ENCODE measurements at regions of chr1 and their contacts with region 1.

Region 1: DNA sequence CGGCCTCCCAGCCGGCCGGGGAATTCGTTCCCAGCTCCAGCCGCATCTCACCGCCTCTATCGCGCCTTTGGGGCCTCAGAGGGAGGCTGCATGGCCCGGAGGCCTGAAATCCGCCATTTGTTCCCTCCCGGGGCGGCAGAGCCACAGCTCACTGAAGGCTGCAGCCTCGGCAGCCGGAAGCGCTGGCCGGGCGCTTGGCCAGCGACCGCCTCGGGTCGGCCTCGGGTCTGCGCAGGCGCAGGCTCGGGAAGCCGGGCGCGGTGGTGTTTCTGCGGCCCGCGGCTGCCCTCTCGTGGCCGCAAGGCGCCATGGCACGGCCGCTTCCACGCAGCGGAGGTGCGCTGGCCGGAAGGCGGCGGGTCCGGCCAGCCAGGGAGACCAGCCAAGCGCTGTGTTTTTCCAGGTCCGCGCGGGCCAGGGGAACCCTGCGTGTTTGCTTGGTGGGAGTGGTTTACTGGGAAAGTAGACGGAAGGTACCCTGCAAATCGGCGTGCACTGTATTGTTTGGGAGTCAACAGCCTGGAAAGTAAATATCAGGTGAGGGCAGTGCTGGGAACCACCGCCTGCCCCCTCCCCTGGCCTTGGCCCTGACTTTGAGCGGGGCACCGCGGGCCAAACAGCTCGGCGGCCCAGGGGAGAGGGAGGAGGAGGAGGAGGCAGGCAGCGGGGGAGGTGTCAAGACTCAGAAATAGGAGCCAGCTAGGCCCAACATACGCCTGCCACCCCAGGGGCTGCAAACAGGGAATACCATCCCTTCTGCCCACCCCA is 52.7 kb upstream of the CD34 start:
- DNase-seq: peak; percentile 61 to 92 (median 79)
- ATAC-seq: peak; percentile 90
- H3K4me3 ChIP-seq: peak overlapping the region; percentile 86
- H3K4me3 Mint-ChIP-seq: peak overlapping the region; percentile 79
- H3K27ac ChIP-seq: no peak overlapping the region
- H3K27ac Mint-ChIP-seq: no peak overlapping the region
- H3K4me1 ChIP-seq: peaks cover 23% of the 10 kb centered on the region
- H3K4me1 Mint-ChIP-seq: peaks cover 8% of the 10 kb centered on the region
- H3K27me3 ChIP-seq: peaks cover 15 to 27% of the 10 kb centered on the region in 2 experiments
- H3K27me3 Mint-ChIP-seq: peaks cover 31% of the 10 kb centered on the region
- CTCF ChIP-seq: peak; percentile 97

Region 2: DNA sequence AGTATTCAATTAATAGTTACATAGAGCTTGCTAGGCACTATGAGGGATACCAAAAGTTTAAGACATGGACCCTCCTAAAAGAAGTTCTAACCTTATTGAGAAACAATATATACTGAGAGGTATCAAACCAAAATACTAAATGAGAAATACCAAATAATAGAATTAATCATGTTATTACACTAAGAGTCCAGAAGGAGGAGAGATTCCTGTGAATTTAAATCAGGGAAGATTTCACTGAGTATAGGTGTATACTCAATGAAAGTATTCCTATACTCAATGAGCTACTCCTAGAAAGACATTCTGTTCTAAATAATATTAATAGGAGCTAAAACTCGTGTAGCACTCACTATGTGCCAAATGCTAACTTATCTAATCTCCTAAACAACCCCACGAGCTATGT is 309.3 kb before region 1 on chr1:
- CTCF ChIA-PET with region 1: no interaction called
- POLR2A ChIA-PET with region 1: no interaction called
- intact Hi-C with region 1: loop called in 1 of 2 experiments (anchors 10 kb)
- DNase-seq: no peak
- ATAC-seq: no peak
- H3K4me3 ChIP-seq: no peak overlapping the region
- H3K4me3 Mint-ChIP-seq: no peak overlapping the region
- H3K27ac ChIP-seq: no peak overlapping the region
- H3K27ac Mint-ChIP-seq: no peak overlapping the region
- H3K4me1 ChIP-seq: no peaks in the 10 kb centered on the region
- H3K4me1 Mint-ChIP-seq: no peaks in the 10 kb centered on the region
- H3K27me3 ChIP-seq: no peaks in the 10 kb centered on the region
- H3K27me3 Mint-ChIP-seq: peaks cover 13% of the 10 kb centered on the region
- CTCF ChIP-seq: no peak

Region 3: GRCh38 chr1:207702317-207702716 is 261.3 kb before region 1 on chr1:
- CTCF ChIA-PET with region 1: no interaction called
- POLR2A ChIA-PET with region 1: no interaction called
- intact Hi-C with region 1: loop called in 1 of 2 experiments (anchors 5 kb)
- DNase-seq: no peak
- ATAC-seq: no peak
- H3K4me3 ChIP-seq: no peak overlapping the region
- H3K4me3 Mint-ChIP-seq: no peak overlapping the region
- H3K27ac ChIP-seq: no peak overlapping the region
- H3K27ac Mint-ChIP-seq: no peak overlapping the region
- H3K4me1 ChIP-seq: no peaks in the 10 kb centered on the region
- H3K4me1 Mint-ChIP-seq: no peaks in the 10 kb centered on the region
- H3K27me3 ChIP-seq: peaks cover 0 to 4% of the 10 kb centered on the region in 2 experiments
- H3K27me3 Mint-ChIP-seq: no peaks in the 10 kb centered on the region
- CTCF ChIP-seq: no peak

Region 4: GRCh38 chr1:207751790-207752455 is 211.7 kb before region 1 on chr1 and contains the start of gene CD46:
- CTCF ChIA-PET with region 1: no interaction called
- POLR2A ChIA-PET with region 1: interaction called, 8 read pairs
- intact Hi-C with region 1: loop called in 1 of 2 experiments (anchors 5 kb)
- DNase-seq: peak; percentile 85 to 97 (median 92)
- ATAC-seq: peak; percentile 95
- H3K4me3 ChIP-seq: peak within 1 kb of the TSS; percentile 97
- H3K4me3 Mint-ChIP-seq: peak within 1 kb of the TSS; percentile 95
- H3K27ac ChIP-seq: peak within 1 kb of the TSS; percentile 66 to 85
- H3K27ac Mint-ChIP-seq: peak within 1 kb of the TSS; percentile 89
- H3K4me1 ChIP-seq: peaks cover 35% of the 10 kb centered on the region
- H3K4me1 Mint-ChIP-seq: peaks cover 84% of the 10 kb centered on the region
- H3K27me3 ChIP-seq: no peaks in the 10 kb centered on the region
- H3K27me3 Mint-ChIP-seq: no peaks in the 10 kb centered on the region
- CTCF ChIP-seq: no peak
- total RNA-seq, gene CD46: 111 to 115 TPM

Region 5: GRCh38 chr1:207838156-207839082 is 125.2 kb before region 1 on chr1:
- CTCF ChIA-PET with region 1: no interaction called
- POLR2A ChIA-PET with region 1: no interaction called
- intact Hi-C with region 1: no loop called
- DNase-seq: no peak
- ATAC-seq: no peak
- H3K4me3 ChIP-seq: no peak overlapping the region
- H3K4me3 Mint-ChIP-seq: no peak overlapping the region
- H3K27ac ChIP-seq: no peak overlapping the region
- H3K27ac Mint-ChIP-seq: peak overlapping the region; percentile 95
- H3K4me1 ChIP-seq: peaks cover 75% of the 10 kb centered on the region
- H3K4me1 Mint-ChIP-seq: peaks cover 95% of the 10 kb centered on the region
- H3K27me3 ChIP-seq: no peaks in the 10 kb centered on the region
- H3K27me3 Mint-ChIP-seq: no peaks in the 10 kb centered on the region
- CTCF ChIP-seq: no peak

Region 6: GRCh38 chr1:207868774-207869721 is 94.6 kb before region 1 on chr1:
- CTCF ChIA-PET with region 1: interaction called, 4 read pairs
- POLR2A ChIA-PET with region 1: interaction called, 10 read pairs
- intact Hi-C with region 1: no loop called
- DNase-seq: peak; percentile 43 to 92 (median 67)
- ATAC-seq: peak; percentile 63
- H3K4me3 ChIP-seq: peak overlapping the region; percentile 98
- H3K4me3 Mint-ChIP-seq: peak overlapping the region; percentile 95
- H3K27ac ChIP-seq: peak overlapping the region; percentile 74 to 89
- H3K27ac Mint-ChIP-seq: peak overlapping the region; percentile 95
- H3K4me1 ChIP-seq: peaks cover 87% of the 10 kb centered on the region
- H3K4me1 Mint-ChIP-seq: peaks cover 85% of the 10 kb centered on the region
- H3K27me3 ChIP-seq: no peaks in the 10 kb centered on the region
- H3K27me3 Mint-ChIP-seq: no peaks in the 10 kb centered on the region
- CTCF ChIP-seq: peak; percentile 60

Region 7: GRCh38 chr1:207885129-207886032 is 78.2 kb before region 1 on chr1:
- CTCF ChIA-PET with region 1: interaction called, 22 read pairs
- POLR2A ChIA-PET with region 1: interaction called, 19 read pairs
- intact Hi-C with region 1: loop called (anchors 1 to 2 kb)
- DNase-seq: peak; percentile 54 to 89 (median 62)
- ATAC-seq: peak; percentile 78
- H3K4me3 ChIP-seq: no peak overlapping the region
- H3K4me3 Mint-ChIP-seq: peak overlapping the region; percentile 76
- H3K27ac ChIP-seq: no peak overlapping the region
- H3K27ac Mint-ChIP-seq: peak overlapping the region; percentile 92
- H3K4me1 ChIP-seq: peaks cover 32% of the 10 kb centered on the region
- H3K4me1 Mint-ChIP-seq: peaks cover 38% of the 10 kb centered on the region
- H3K27me3 ChIP-seq: no peaks in the 10 kb centered on the region
- H3K27me3 Mint-ChIP-seq: peaks cover 5% of the 10 kb centered on the region
- CTCF ChIP-seq: peak; percentile 98

Region 8: DNA sequence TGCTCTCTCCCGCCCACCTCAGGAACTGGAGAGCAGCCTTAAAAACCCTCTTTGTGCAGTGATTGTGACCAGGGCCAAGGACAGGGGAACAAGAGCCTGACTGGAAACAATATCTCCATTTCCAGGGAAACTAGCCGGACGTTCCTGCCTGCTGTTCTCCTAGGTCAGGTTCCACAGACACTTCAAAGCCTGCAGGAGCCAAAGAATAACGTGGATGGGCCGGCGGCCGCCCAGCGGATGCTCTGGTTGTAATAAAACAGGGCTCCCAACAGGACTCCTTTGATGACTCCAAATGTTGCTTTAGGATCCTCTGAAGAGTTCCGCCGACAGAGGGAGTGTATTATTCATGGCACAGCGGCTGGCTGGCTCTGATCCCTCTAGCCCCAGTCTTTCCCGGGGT is 118.4 kb after region 1 on chr1:
- CTCF ChIA-PET with region 1: no interaction called
- POLR2A ChIA-PET with region 1: no interaction called
- intact Hi-C with region 1: no loop called
- DNase-seq: no peak
- ATAC-seq: no peak
- H3K4me3 ChIP-seq: no peak overlapping the region
- H3K4me3 Mint-ChIP-seq: no peak overlapping the region
- H3K27ac ChIP-seq: no peak overlapping the region
- H3K27ac Mint-ChIP-seq: no peak overlapping the region
- H3K4me1 ChIP-seq: peaks cover 12% of the 10 kb centered on the region
- H3K4me1 Mint-ChIP-seq: peaks cover 17% of the 10 kb centered on the region
- H3K27me3 ChIP-seq: no peaks in the 10 kb centered on the region
- H3K27me3 Mint-ChIP-seq: no peaks in the 10 kb centered on the region
- CTCF ChIP-seq: no peak

Measured in CD4-positive, alpha-beta T cell (primary cell).